Posterior vena cava (tissue), 2 donors: ENCODE measurements at regions of chr7 and their contacts with region 1.

Region 1: GRCh38 chr7:89091550-89091949 is 296.0 kb upstream of the TEX47 start:
- DNase-seq: no peak

Region 2: GRCh38 chr7:88462799-88463198 is 628.8 kb before region 1 on chr7:
- intact Hi-C with region 1: loop called in 1 of 2 experiments (anchors 5 kb)
- DNase-seq: no peak

Region 3: GRCh38 chr7:89145801-89146200 is 54.3 kb after region 1 on chr7:
- intact Hi-C with region 1: no loop called
- DNase-seq: no peak